Posterior cingulate gyrus (tissue), 11 donors: ENCODE measurements at regions of chr12 and their contacts with region 1.

Region 1: GRCh38 chr12:107760809-107761501 is at the start of gene PRDM4:
- DNase-seq: peak; percentile 88 to 99 (median 91)

Region 2: GRCh38 chr12:107337346-107338095 is 423.4 kb before region 1 on chr12:
- intact Hi-C with region 1: no loop called
- DNase-seq: no peak

Region 3: DNA sequence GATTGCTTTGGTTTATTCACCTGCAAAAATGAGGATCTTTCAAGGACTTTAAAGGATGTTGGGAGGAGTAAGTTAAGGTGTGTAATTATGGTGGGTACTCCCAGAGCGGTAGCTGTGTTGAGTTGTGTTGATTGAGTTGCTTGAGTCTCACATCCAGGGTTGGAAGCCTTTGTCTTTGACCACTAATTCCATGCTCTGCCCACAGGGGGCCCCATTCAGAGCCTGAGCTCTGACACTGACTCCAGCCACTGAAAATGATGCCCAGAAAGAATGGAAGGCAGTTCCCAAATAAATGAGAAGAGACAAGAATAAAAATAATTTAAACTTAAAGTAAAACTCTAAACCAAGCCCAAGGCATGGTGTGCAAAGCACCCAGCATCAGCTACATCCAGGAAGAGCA is 312.8 kb before region 1 on chr12:
- intact Hi-C with region 1: no loop called
- DNase-seq: no peak

Region 4: GRCh38 chr12:107685360-107686248 is 75.4 kb before region 1 on chr12 and contains the start of gene PWP1:
- intact Hi-C with region 1: loop called (anchors 1 kb)
- DNase-seq: peak; percentile 81 to 99 (median 91)

Region 5: DNA sequence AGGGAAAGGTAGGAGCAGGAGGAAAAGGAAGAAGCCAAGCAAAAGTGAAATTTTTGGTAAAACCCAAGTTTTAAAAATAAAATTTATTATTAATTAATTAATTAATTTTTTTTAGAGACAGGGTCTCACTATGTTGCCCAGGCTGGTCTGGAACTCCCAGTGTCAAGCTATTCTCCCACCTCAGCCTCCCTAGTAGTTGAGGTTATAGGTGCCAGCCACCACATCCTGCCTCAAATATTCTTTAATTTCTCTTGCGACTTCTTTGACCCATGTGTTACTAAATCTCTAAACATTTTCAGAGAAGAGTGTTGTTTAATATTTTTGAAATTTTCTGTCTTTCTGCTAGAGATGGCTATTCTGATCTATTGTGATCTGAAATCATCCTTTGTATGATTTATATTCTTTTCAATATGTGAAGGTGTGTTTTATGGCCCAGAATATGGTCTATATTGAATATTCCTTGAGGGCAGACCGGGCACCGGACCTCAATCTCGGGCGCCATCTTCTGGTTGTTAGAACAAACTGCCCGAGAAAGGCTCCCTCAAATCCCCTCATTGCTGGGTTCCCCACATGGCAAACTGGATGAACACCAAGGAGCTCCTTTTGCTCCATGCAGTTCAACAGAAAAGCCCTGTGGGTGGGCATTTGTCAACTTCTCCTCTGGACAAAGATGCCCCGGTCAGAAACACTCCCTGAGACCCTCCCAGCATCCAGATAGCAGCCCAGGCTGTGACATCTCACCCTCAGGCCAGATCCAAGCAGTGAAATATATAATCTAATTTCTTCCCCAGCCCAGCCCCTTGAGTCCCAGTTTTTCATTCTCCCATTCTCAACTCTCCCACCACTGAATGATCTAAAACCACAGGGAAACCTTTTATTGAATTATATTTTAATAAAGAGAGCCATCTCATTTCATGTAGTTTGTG is 124.1 kb after region 1 on chr12:
- intact Hi-C with region 1: loop called (anchors 5 kb)
- DNase-seq: peak in 8 of 10 donors; percentile 38 to 91 (median 52)